Endothelial cell of umbilical vein (primary cell): ENCODE measurements at regions of chr17 and their contacts with region 1.

Region 1: DNA sequence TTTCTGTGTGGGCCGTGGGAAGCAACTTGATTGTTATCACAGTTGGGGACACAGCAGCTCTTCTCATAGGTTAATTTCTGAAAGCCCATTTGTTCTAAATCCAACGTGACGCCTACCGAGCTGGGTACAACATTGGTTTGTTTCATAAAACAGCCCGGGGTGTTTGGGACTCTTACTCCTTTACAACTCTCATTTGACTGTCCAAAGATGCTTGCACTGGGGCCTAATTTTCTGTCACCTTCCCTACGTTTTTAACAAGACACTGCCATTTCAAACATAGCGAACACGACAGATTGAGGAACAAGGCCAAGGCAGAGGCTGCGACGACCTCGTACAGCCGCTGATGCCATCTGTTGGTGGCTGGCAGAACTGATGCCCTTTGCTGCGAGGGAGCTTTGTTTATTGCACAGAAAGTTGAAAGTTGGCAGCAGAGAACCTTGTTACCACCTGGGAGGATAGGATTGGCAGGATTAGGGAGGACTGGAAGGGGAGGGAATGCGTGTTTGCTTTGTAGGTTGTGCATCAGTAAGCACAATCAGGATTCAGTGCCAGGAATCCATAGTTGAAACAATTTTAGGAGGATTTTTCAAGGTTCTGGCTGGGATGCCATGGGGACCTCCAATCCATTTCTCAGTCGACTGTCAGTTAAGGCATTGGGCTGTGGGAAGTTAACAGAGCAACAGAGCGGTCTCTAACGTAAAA is 98.3 kb downstream of the PITPNC1 start:
- DNase-seq: peak; percentile 81
- H3K4me3 ChIP-seq: no peak overlapping the region
- H3K27ac ChIP-seq: no peak overlapping the region
- H3K4me1 ChIP-seq: peaks cover 6% of the 10 kb centered on the region
- H3K27me3 ChIP-seq: peaks cover 0 to 2% of the 10 kb centered on the region in 2 experiments
- CTCF ChIP-seq: peak; percentile 96
- POLR2A ChIP-seq: no peak

Region 2: GRCh38 chr17:67390646-67391384 is 84.6 kb before region 1 on chr17:
- CTCF ChIA-PET with region 1: interaction called, 131 read pairs
- POLR2A ChIA-PET with region 1: no interaction called
- dilution Hi-C with region 1: no loop called
- intact Hi-C with region 1: loop called (anchors 1 kb)
- DNase-seq: peak; percentile 93
- H3K4me3 ChIP-seq: no peak overlapping the region
- H3K27ac ChIP-seq: peak overlapping the region; percentile 59
- H3K4me1 ChIP-seq: peaks cover 12% of the 10 kb centered on the region
- H3K27me3 ChIP-seq: no peaks in the 10 kb centered on the region
- CTCF ChIP-seq: no peak
- POLR2A ChIP-seq: no peak

Region 3: DNA sequence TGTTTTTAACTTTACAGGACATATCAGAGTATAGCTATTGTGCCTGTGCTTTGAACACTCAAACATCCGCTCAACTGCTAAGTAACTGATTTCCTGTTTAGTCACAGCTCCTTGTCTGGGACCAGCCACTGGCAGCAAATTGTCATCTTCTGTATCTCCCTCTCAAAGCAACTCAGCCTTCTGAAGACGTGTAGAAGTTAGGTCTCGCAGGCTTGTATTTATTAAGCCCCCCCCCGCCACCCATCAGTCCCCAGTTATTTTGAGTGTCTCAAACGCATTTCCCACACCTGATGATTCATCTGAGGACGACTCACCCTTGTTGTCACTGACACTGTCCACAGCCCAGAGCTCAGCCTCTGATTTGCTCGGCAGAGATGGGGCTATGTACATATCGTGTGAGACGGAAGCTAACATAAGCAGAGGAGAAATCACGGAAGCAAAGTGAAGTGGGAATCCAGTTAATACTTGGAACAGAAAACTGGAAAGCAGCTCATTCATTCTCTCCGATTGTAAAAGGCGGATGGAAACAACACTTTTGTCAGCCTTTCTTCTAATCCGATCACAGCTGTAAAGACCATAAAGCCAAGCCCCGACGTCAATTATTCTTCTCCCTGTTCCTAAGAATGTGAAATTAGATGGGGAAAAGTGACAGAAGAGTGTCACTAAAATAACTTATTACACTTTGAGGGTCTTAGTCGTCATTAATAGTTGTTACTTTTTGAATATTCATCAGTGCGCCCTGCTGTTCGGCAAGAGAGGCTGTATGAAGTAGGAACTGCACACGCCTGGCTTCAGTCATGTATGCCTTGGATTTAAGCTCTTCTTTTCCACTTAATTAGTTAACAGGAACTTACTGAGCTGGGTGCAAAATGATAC is 34.1 kb before region 1 on chr17:
- CTCF ChIA-PET with region 1: interaction called, 30 read pairs
- POLR2A ChIA-PET with region 1: no interaction called
- dilution Hi-C with region 1: no loop called
- intact Hi-C with region 1: loop called (anchors 2 kb)
- DNase-seq: peak; percentile 64
- H3K4me3 ChIP-seq: no peak overlapping the region
- H3K27ac ChIP-seq: peak overlapping the region; percentile 15
- H3K4me1 ChIP-seq: peaks cover 23% of the 10 kb centered on the region
- H3K27me3 ChIP-seq: no peaks in the 10 kb centered on the region
- CTCF ChIP-seq: no peak
- POLR2A ChIP-seq: no peak

Region 4: DNA sequence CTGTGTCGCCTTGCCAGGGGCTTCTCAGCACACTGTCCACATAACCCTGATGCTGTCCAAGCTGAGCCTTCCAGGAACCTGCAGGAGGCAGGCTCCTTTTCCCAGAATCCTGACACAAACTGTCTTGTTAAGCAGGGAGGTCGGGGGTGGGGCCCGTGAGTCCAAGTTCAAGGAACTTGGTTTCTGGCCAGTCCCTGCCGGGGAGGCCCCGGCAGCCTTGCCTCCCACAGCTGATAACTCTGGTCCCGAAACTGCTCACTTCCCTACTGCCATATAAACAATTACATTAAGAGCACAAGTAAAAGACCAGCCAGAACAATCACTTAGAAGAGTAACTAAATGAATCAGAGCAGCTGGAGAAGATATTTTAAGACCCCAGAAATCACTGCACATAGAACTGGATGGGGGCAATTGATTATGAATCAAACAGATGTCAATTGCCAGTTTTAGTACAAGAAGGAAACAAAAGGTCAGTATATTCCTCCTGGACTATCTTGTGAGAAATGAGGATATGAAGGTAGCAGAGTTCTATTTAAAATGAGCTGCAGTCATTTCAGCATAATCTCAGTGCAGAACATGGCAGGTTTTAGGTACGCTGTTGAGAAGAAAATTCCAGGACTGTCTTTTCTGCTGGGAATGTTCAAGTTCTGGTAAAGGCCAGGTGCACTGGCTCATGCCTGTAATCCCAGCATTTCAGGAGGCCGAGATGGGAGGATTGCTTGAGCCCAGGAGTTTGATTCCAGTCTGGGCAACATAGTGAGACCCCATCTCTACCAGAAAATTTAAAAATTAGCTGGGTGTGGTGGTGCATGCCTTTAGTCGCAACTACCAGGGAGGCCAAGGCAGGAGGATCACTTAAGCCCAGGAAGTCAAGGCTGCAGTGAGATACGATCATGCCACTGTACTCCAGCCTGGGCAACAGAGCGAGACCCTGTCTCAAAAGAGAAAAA is 71.5 kb after region 1 on chr17:
- CTCF ChIA-PET with region 1: interaction called, 5 read pairs
- POLR2A ChIA-PET with region 1: no interaction called
- dilution Hi-C with region 1: no loop called
- intact Hi-C with region 1: loop called (anchors 5 kb)
- DNase-seq: peak; percentile 35
- H3K4me3 ChIP-seq: no peak overlapping the region
- H3K27ac ChIP-seq: no peak overlapping the region
- H3K4me1 ChIP-seq: peaks cover 12% of the 10 kb centered on the region
- H3K27me3 ChIP-seq: no peaks in the 10 kb centered on the region
- CTCF ChIP-seq: no peak
- POLR2A ChIP-seq: no peak

Region 5: DNA sequence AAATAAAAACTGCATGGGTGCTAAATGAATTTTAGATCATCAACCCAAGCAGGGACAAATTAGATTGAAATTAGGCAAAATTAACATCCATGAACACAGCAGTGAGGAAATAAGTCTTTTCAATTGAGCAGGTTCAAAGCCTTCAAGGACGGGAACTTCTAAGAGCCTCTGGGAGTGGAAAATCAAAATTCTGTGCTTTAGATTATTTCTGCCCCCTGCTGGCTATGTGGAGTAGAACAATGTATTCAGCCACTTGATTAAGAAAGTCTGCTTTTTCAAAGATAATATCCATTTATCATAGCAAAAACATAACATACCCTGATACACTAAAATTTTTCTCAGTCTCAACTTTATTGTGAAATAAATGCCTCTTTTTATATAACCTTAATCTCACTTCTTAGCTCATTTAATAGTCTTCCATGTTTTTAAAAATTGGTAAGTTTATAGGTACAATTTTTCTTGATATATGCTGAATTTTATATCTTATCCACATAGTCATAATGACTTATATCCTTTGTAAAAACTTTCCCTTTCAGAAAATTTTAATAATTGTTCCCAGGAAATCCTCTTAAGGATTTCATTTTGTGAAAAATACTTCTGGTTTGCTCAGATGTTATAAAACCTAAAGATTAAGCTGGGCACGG is 214.3 kb after region 1 on chr17:
- CTCF ChIA-PET with region 1: interaction called, 7 read pairs
- POLR2A ChIA-PET with region 1: no interaction called
- dilution Hi-C with region 1: no loop called
- intact Hi-C with region 1: loop called (anchors 1 kb)
- DNase-seq: peak; percentile 76
- H3K4me3 ChIP-seq: no peak overlapping the region
- H3K27ac ChIP-seq: no peak overlapping the region
- H3K4me1 ChIP-seq: no peaks in the 10 kb centered on the region
- H3K27me3 ChIP-seq: no peaks in the 10 kb centered on the region
- CTCF ChIP-seq: peak; percentile 52 to 54
- POLR2A ChIP-seq: no peak